ENCODE measurements at regions of chr3 and their contacts with region 1.

Region 1: DNA sequence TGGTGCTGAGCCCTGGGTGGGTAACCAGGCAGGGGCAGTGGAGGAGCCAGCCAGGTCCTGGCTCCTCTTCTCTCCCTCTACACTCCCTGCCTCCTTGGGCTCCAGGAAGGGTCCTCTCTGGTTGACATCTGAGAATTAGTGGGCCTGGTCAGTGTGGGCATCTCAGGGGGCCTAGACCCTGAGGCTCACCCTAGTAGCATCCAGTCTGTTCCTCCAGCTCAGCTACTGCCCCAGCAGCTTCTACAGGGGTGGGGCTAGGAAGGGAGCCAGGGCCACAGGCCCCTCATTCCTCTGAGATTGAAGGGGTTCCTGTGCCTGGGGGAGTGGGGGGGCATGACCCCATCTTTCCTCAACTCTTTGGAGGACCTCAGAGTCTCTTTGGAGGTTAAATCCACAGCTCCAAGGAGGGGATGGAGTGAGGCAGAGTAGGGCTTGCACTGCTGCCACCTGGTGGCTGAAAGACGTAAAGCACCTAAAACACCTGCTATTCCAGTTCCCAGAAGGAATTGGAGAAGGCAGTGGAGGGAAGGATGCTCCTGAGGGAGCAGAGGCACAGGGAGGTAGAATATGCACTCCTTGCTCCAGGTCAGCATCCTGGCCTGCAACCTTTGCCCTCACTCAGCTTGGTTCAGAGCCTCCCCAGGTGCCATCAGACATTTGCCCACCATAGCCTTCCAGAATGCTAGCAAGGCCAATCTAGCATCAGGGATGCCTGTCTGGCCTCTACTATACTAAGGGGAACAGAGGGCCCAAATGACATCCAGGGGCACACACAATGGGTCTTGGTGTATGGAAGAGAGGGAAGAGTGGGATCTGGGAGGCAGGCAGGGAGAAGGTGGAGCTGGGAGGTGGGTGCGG is 25.1 kb downstream of the C3orf18 start:
- DNase-seq: peak; percentile 89
- H3K4me3 ChIP-seq: no peak overlapping the region; a peak in 1 of 4 replicates
- H3K27ac ChIP-seq: no peak overlapping the region; a peak in 1 of 4 replicates
- H3K4me1 ChIP-seq: peaks cover 0 to 43% of the 10 kb centered on the region in 2 experiments; a peak in 1 of 4 replicates
- H3K27me3 ChIP-seq: peaks cover 6% of the 10 kb centered on the region; the same call in 1 of the 2 replicates
- CTCF ChIP-seq: peak; percentile 86
- EP300 ChIP-seq: no peak
- RAD21 ChIP-seq: peak; percentile 88

Region 2: DNA sequence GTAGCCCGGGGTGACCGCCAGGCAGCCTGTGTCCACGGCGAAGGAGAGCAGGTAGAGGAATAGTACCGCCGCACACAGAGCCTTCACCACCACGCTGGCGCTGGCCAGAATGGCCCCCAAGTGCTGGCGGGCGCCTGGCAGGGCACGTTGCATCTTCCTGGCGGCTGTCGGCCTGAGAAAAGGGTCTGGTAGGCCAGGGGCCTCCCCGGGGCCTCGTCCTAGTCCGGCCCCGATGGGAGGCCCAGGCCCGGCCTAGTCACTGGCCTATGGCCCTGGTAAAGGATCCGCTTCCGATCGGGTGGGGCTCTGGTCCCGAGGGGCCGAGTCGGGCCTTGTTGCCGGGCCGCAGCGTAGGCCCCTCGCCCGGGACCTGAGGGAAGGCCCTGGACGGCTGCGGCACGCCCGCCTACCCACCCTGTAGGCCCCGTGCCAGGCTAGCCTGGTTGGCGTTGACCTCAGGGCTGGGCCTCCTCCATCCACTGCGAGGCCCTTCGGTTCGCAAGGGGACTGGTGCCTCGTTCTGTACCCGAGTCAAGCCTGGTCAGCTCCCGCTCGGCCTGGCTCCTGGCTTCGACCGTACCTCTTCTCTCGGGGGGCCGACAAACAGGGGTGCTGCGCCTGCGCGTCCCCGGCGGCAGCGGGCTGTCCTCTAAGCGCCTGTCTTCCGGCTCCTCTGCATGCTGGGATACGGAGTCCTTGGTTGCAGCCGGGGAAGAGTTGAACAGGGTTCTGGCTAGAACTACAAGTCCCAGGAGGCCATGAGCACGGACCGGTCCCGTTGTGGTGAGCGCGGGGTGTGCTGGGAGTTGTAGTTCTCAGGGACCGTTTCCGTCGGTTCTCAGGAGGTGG is 183.3 kb before region 1 on chr3 and contains the start of gene TMEM115:
- CTCF ChIA-PET with region 1: interaction called, 47 read pairs
- POLR2A ChIA-PET with region 1: interaction called, 3 read pairs
- DNase-seq: peak; percentile 98
- H3K4me3 ChIP-seq: peak within 1 kb of the TSS; percentile 77 to 95
- H3K27ac ChIP-seq: peak within 1 kb of the TSS; percentile 60 to 84; a peak in 3 of 4 replicates
- H3K4me1 ChIP-seq: peaks cover 8 to 49% of the 10 kb centered on the region in 2 experiments; a peak in 2 of 4 replicates
- H3K27me3 ChIP-seq: no peaks in the 10 kb centered on the region
- CTCF ChIP-seq: no peak
- EP300 ChIP-seq: no peak; a peak in 1 of 4 replicates
- RAD21 ChIP-seq: no peak
- polyA plus RNA-seq, gene TMEM115: 47.8 and 49.2 TPM in 2 replicates

Region 3: DNA sequence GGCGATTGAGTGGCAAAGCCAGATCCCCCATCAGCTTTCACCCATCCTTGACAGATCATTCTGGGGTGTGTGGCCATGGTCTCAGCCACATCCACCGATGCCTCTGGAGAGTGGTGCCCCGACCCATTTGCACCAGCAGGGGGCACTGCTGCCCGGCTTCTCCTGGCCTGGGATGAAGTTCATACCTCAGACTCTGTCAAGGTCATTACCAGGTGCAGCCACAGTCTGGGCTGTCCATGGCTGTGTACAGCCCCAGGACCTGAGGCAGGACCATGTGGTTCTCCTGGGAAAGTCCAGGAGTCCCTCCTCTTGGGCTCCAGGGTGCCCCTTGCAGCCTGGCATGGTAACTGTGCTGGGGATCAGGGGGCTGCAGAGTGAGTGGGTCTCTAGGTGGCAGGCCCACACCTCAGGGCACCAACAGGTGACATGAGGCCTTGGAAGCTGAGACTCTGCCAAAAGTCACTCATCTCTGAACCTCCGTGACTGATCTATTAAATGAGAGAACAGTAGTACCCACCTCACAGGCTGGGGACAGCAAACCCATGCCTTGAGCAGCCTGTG is 106.2 kb before region 1 on chr3:
- CTCF ChIA-PET with region 1: interaction called, 499 read pairs
- POLR2A ChIA-PET with region 1: no interaction called
- DNase-seq: peak; percentile 85
- H3K4me3 ChIP-seq: peak overlapping the region in 1 of 2 experiments; percentile 33; a peak in 1 of 4 replicates
- H3K27ac ChIP-seq: peak overlapping the region in 1 of 2 experiments; percentile 100; a peak in 2 of 4 replicates
- H3K4me1 ChIP-seq: peaks cover 0 to 97% of the 10 kb centered on the region in 2 experiments; a peak in 2 of 4 replicates
- H3K27me3 ChIP-seq: no peaks in the 10 kb centered on the region
- CTCF ChIP-seq: peak; percentile 84
- EP300 ChIP-seq: no peak
- RAD21 ChIP-seq: peak; percentile 85

Region 4: DNA sequence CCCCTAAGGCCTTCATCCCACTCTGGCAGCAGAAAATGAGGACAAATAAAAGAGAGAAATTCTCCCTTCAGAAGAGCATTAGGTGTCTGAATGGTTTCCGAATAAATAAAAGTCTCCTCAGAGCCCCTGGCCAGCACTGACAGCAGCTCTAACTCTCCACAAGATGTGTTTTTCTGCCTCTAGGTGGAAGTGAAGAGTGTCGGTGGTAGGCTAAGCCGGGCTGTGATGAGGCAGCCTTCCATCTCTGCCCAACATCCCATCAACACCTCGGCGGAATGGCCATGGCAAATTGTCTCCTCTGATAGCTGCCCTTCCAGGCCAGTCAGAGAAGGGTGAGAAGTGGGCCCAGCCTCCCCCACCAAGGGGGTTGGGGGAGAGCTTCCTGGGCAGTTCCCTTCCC is 32.7 kb before region 1 on chr3:
- CTCF ChIA-PET with region 1: interaction called, 94 read pairs
- POLR2A ChIA-PET with region 1: no interaction called
- DNase-seq: no peak
- H3K4me3 ChIP-seq: no peak overlapping the region
- H3K27ac ChIP-seq: no peak overlapping the region
- H3K4me1 ChIP-seq: peaks cover 0 to 34% of the 10 kb centered on the region in 2 experiments; a peak in 1 of 4 replicates
- H3K27me3 ChIP-seq: peaks cover 18% of the 10 kb centered on the region; the same call in 1 of the 2 replicates
- CTCF ChIP-seq: no peak
- EP300 ChIP-seq: no peak
- RAD21 ChIP-seq: no peak

Region 5: GRCh38 chr3:50532058-50532705 is 10.2 kb before region 1 on chr3:
- CTCF ChIA-PET with region 1: interaction called, 114 read pairs
- POLR2A ChIA-PET with region 1: no interaction called
- DNase-seq: no peak
- H3K4me3 ChIP-seq: no peak overlapping the region
- H3K27ac ChIP-seq: no peak overlapping the region
- H3K4me1 ChIP-seq: peaks cover 0 to 14% of the 10 kb centered on the region in 2 experiments; a peak in 1 of 4 replicates
- H3K27me3 ChIP-seq: peaks cover 12% of the 10 kb centered on the region
- CTCF ChIP-seq: no peak
- EP300 ChIP-seq: no peak
- RAD21 ChIP-seq: no peak

Region 6: DNA sequence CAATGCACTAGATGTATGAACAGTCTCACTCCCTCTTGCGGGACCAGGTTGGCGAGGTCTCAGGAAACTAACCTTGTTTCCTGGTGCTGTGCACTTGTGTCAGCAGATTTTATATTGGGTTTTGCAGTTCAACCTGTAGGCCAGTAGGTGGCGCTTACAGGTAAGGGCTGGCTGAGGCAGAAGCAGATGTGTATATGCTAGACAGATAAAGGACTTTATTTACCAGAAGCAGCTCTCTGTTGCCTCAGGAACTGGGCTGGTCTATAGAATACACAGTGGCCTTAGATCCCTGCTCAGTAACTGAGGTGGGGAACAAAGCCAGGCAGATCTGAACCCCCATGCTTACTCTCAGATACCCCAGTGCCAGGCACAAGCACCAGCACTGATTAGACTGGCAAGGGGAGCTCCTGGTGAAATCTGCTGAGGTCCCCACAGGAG is 429.1 kb after region 1 on chr3:
- CTCF ChIA-PET with region 1: no interaction called
- POLR2A ChIA-PET with region 1: no interaction called
- DNase-seq: peak; percentile 51
- H3K4me3 ChIP-seq: peak overlapping the region in 1 of 2 experiments; percentile 32; a peak in 1 of 4 replicates
- H3K27ac ChIP-seq: no peak overlapping the region
- H3K4me1 ChIP-seq: no peaks in the 10 kb centered on the region
- H3K27me3 ChIP-seq: no peaks in the 10 kb centered on the region
- CTCF ChIP-seq: peak; percentile 75
- EP300 ChIP-seq: no peak
- RAD21 ChIP-seq: peak; percentile 78

Measured in SK-N-SH (cell line).